ENCODE measurements at regions of chr9 and their contacts with region 1.

Region 1: DNA sequence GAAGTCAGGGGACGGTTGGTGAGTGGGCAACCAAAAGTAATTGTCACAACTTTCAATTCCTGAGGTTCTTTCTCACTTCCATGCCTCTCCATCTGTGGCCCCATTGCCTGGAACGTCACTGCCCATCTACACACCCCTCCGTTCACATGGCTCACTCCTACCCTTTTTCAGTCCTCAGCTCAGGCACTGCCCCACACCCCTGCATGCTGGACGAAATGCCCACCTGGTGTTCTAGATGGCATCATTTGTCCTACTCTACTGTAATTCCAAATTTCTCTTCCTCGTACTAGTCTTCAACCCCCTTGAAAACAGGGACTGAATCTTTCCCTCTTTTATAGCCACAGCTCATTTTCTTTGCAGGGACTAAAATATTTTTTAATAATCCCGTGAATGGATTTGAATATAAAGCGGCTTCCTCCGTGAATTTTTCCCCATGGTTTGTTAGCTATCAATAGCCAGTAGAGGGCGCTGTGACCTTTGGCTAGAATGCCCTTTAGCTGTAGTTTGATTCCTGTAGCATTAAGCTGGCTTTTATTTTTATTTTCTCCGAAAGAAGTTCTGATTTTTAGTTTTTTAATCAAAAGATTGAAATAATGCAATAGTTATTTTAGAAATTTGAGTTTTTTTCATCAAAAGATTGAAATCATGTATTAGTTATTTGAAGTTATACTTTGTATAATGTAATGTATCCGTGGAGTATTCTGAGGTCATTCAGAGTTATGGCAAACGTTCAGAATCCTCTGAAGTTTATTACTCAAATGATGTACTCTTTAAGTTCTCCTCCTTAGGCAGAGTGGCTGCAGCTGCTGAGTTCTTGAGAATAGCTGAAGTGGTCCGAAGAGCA is 232.1 kb downstream of the SH3GL2 start:
- DNase-seq: no peak
- H3K4me3 ChIP-seq: no peak overlapping the region
- H3K27ac ChIP-seq: no peak overlapping the region
- H3K4me1 ChIP-seq: no peaks in the 10 kb centered on the region
- H3K27me3 ChIP-seq: no peaks in the 10 kb centered on the region
- CTCF ChIP-seq: peak; percentile 53 to 92 (median 75)
- POLR2A ChIP-seq: no peak

Region 2: GRCh38 chr9:18092138-18092537 is 281.2 kb after region 1 on chr9:
- intact Hi-C with region 1: no loop called
- DNase-seq: no peak
- H3K4me3 ChIP-seq: no peak overlapping the region
- H3K27ac ChIP-seq: no peak overlapping the region
- H3K4me1 ChIP-seq: no peaks in the 10 kb centered on the region
- H3K27me3 ChIP-seq: no peaks in the 10 kb centered on the region
- CTCF ChIP-seq: no peak
- POLR2A ChIP-seq: no peak

Region 3: GRCh38 chr9:18215626-18216025 is 404.7 kb after region 1 on chr9:
- intact Hi-C with region 1: loop called (anchors 10 kb)
- DNase-seq: no peak
- H3K4me3 ChIP-seq: no peak overlapping the region
- H3K27ac ChIP-seq: no peak overlapping the region
- H3K4me1 ChIP-seq: no peaks in the 10 kb centered on the region
- H3K27me3 ChIP-seq: no peaks in the 10 kb centered on the region
- CTCF ChIP-seq: no peak
- POLR2A ChIP-seq: no peak